A549 (cell line): ENCODE measurements at regions of chr19 and their contacts with region 1.

Region 1: GRCh38 chr19:40798223-40798996 is 581 bp upstream of the EGLN2 start:
- DNase-seq: peak; percentile 99 to 100
- ATAC-seq: peak; percentile 86 to 92
- H3K4me3 ChIP-seq: peak overlapping the region; percentile 84
- H3K27ac ChIP-seq: peak overlapping the region; percentile 95 to 96
- H3K4me1 ChIP-seq: peaks cover 42% of the 10 kb centered on the region
- CTCF ChIP-seq: peak; percentile 67
- EP300 ChIP-seq: no peak
- POLR2A ChIP-seq: 0 out of 2 replicates have a peak, but pooled peaks have one; percentile 23
- RAD21 ChIP-seq: 0 out of 5 replicates have a peak, but pooled peaks have one; percentile 11 to 33

Region 2: GRCh38 chr19:40658031-40658430 is 140.4 kb before region 1 on chr19:
- CTCF ChIA-PET with region 1: interaction called, 162 read pairs
- POLR2A ChIA-PET with region 1: interaction called, 6 read pairs
- DNase-seq: no peak
- ATAC-seq: no peak
- H3K4me3 ChIP-seq: no peak overlapping the region
- H3K27ac ChIP-seq: no peak overlapping the region
- H3K4me1 ChIP-seq: 0 out of 3 replicates have a peak, but pooled peaks cover 3% of the 10 kb centered on the region
- CTCF ChIP-seq: no peak
- EP300 ChIP-seq: no peak
- POLR2A ChIP-seq: no peak
- RAD21 ChIP-seq: no peak

Region 3: GRCh38 chr19:40716655-40717324 is 81.6 kb before region 1 on chr19 and contains the starts of genes COQ8B and ITPKC:
- CTCF ChIA-PET with region 1: interaction called, 6 read pairs
- POLR2A ChIA-PET with region 1: interaction called, 16 read pairs
- DNase-seq: peak; percentile 99 to 100
- ATAC-seq: peak; percentile 45 to 61
- H3K4me3 ChIP-seq: peak within 1 kb of the TSS; percentile 64
- H3K27ac ChIP-seq: peak within 1 kb of the TSS; percentile 88 to 93
- H3K4me1 ChIP-seq: peaks cover 34% of the 10 kb centered on the region
- CTCF ChIP-seq: no peak
- EP300 ChIP-seq: no peak; a peak in 1 of 5 replicates
- POLR2A ChIP-seq: peak; percentile 60
- RAD21 ChIP-seq: peak in 1 of 2 experiments; percentile 14; a peak in 2 of 5 replicates
- polyA plus RNA-seq, gene COQ8B: 43.9 and 47.2 TPM in 2 replicates
- polyA plus RNA-seq, gene ITPKC: 6.5 and 8.7 TPM in 2 replicates

Region 4: DNA sequence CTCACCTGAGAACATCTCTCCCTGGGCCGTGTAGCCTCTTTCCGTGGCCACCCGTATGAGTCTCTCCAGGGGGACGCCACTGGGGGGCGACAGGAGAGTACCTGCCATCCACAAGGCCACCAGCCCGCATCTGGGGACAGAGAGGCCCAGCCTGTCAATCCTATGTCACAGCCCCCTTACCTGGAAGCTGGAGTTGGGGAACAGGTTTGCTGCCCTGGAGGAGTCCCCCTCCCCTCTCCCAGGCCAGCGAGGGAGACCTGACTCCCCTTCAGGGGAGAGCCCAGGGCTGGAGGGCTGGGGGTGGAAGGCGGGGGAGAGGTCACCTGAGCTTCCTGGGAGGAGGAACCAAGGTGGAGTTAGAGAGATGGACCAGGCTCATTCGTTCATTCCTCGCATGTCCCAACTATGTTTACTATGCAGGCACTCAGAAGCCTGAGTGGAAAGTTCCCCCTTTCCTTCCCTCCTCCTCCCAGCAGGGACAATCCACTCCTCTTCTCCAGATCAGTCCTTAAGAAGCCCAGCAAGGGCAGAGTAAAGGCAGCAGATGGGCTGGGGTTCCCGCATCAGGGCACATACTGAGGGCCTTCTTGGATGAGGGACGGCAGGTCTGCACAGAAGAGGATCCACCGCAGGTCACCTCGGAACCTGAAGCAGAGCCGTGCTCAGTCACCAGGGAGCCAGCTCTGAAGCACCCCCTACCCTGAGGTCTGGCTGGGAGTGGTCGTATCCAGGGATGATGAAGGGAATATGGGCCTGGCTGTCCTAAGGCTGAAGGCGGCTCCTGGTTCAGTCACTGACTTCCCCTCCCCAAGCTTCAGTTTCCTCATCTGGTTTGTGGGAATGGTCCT is 53.6 kb before region 1 on chr19:
- CTCF ChIA-PET with region 1: interaction called, 20 read pairs
- POLR2A ChIA-PET with region 1: interaction called, 44 read pairs
- DNase-seq: no peak
- ATAC-seq: peak; percentile 7 to 46; a peak in 4 of 6 replicates
- H3K4me3 ChIP-seq: no peak overlapping the region
- H3K27ac ChIP-seq: peak overlapping the region in 1 of 2 experiments; percentile 64; a peak in 3 of 6 replicates
- H3K4me1 ChIP-seq: peaks cover 28% of the 10 kb centered on the region
- CTCF ChIP-seq: peak; percentile 24; the same call in 1 of the 3 replicates
- EP300 ChIP-seq: no peak
- POLR2A ChIP-seq: no peak
- RAD21 ChIP-seq: peak; percentile 34; a peak in 4 of 5 replicates

Region 5: DNA sequence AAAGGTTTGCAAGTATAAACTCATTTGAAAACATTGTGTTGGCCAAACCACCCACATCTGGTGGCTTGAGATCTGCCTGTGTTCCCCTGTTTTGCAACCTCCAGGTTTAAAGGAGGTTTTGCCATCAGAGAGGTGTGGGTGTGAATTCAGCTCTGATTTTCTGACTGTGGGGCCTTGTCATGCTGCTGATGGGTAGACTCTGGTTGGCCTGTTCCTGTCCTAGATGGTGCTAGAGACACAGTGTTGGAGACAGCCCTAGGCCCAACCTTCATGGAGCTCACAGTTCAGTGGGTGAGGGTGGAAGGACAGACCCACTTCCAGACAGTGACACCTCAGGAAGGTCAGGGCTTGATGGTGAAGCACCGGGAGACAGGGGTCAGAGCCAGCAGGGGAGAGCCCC is 12.9 kb before region 1 on chr19:
- CTCF ChIA-PET with region 1: interaction called, 65 read pairs
- POLR2A ChIA-PET with region 1: interaction called, 22 read pairs
- DNase-seq: no peak
- ATAC-seq: peak; percentile 55 to 62
- H3K4me3 ChIP-seq: no peak overlapping the region
- H3K27ac ChIP-seq: no peak overlapping the region
- H3K4me1 ChIP-seq: no peaks in the 10 kb centered on the region
- CTCF ChIP-seq: no peak
- EP300 ChIP-seq: no peak
- POLR2A ChIP-seq: no peak
- RAD21 ChIP-seq: no peak

Region 6: DNA sequence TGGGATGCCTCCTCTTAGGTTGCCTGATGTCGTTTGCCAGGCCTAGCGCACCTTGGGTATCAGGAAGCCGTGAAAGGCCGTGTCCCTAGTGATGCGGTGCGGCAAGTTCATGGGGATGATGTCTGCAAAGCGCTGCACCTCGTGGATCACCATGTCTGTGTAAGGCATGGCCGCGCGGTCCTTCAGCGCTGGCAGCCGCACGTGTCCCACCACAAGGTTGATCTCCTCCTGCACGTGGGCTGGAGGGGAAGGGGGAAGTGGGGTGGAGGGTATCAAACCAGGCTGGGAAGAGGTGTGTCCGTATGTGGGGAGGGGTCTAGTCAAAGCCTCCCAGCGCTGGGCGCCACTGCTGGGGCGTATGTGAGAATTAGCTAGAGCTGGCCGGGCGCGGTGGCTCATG is 23.8 kb after region 1 on chr19:
- CTCF ChIA-PET with region 1: interaction called, 146 read pairs
- POLR2A ChIA-PET with region 1: no interaction called
- DNase-seq: no peak
- ATAC-seq: no peak
- H3K4me3 ChIP-seq: no peak overlapping the region
- H3K27ac ChIP-seq: peak overlapping the region in 1 of 2 experiments; percentile 31; a peak in 2 of 6 replicates
- H3K4me1 ChIP-seq: peaks cover 39% of the 10 kb centered on the region
- CTCF ChIP-seq: no peak
- EP300 ChIP-seq: no peak
- POLR2A ChIP-seq: no peak
- RAD21 ChIP-seq: no peak

Region 7: GRCh38 chr19:40862785-40863184 is 64.4 kb after region 1 on chr19:
- CTCF ChIA-PET with region 1: no interaction called
- POLR2A ChIA-PET with region 1: no interaction called
- DNase-seq: peak in 1 of 2 experiments; percentile 56
- ATAC-seq: peak in 1 of 2 experiments; percentile 45; a peak in 5 of 6 replicates
- H3K4me3 ChIP-seq: no peak overlapping the region
- H3K27ac ChIP-seq: peak overlapping the region in 1 of 2 experiments; percentile 4; a peak in 1 of 6 replicates
- H3K4me1 ChIP-seq: peaks cover 18% of the 10 kb centered on the region
- CTCF ChIP-seq: no peak
- EP300 ChIP-seq: no peak
- POLR2A ChIP-seq: no peak
- RAD21 ChIP-seq: no peak